ENCODE measurements at regions of chr12 and their contacts with region 1.

Region 1: DNA sequence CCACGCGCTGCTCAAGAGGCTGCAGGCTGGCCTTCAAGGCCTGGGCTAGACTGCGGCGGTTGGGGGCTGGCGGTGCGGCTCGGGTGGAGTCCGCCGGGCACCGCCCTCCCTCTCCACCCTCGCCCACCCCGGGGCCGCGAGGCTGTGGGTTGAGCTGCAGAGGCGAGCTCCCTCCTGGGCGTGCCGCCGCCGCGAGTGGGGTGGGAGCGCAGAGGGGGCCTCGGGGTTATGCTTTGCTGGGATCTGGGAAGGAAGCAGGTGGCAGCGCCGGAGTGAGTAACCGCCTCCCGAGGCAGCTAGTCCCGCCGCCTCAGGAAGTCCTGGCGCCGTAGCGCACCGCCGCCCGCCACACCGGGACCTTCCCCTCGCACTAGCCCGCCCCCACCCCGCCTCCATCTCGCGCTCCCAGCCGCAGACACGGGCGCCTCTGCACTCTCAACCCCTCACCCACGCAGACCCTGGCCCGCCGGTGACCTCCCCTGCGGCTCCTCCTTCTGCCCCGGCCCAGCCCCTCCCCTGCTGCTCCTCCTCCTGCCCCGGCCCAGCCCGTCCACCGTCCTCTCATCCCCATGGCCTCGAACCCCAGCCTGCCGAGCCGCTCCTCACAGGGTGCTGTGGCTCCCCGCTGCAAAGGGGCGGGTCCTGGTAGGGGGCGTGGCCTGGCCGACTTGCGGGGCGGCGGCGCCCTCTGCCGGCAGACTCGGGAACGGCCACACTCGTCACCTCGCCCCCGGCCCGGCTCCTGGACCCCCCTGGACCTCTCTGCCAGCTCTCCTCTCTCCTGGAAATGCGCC is 16.6 kb downstream of the TAMALIN start:
- DNase-seq: peak; percentile 93
- H3K4me3 Mint-ChIP-seq: peak overlapping the region; percentile 86
- H3K27ac Mint-ChIP-seq: peak overlapping the region; percentile 98
- H3K4me1 Mint-ChIP-seq: peaks cover 46% of the 10 kb centered on the region
- H3K27me3 Mint-ChIP-seq: peaks cover 6% of the 10 kb centered on the region

Region 2: DNA sequence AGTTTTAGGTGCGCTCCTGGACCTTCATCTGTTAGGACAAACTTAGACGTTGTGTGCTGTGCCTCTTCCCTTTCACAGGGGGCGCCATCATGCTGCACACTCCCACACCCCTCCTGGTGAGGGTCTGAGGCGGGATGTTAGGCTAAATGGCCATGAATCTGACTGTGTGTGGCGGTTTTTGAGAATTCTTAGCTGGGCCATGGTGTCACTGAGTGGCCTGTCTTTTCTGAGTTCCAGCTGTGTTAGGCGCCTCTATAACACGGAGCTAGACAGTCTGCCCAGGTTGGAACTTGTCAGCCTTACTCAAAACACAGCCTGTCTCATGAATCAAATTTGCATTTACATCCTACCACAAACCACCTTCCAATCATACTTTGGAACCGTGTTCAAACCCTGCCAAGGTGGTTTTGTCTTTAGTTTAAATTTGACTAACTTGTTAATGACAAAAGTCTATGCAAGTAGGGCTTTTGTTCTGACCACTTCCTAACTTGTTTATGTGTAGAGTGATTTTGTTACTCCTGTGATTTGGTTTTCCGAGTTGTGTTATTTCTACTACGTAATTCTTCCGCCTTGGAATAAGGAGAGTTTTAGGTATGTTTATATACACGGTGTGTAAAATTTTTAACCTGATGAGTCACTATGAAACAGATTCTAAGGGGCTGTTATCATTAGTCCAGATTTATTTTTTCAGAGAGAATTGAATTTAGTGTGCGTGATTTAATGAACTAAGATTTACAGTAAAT is 52.3 kb before region 1 on chr12:
- CTCF ChIA-PET with region 1: interaction called, 33 read pairs
- POLR2A ChIA-PET with region 1: interaction called, 5 read pairs
- DNase-seq: peak; percentile 68
- H3K4me3 Mint-ChIP-seq: peak overlapping the region; percentile 53
- H3K27ac Mint-ChIP-seq: peak overlapping the region; percentile 80
- H3K4me1 Mint-ChIP-seq: peaks cover 65% of the 10 kb centered on the region
- H3K27me3 Mint-ChIP-seq: peaks cover 36% of the 10 kb centered on the region

Region 3: GRCh38 chr12:52004042-52004648 is 19.2 kb before region 1 on chr12:
- CTCF ChIA-PET with region 1: interaction called, 299 read pairs
- POLR2A ChIA-PET with region 1: interaction called, 117 read pairs
- DNase-seq: no peak
- H3K4me3 Mint-ChIP-seq: no peak overlapping the region
- H3K27ac Mint-ChIP-seq: no peak overlapping the region
- H3K4me1 Mint-ChIP-seq: peaks cover 24% of the 10 kb centered on the region
- H3K27me3 Mint-ChIP-seq: peaks cover 34% of the 10 kb centered on the region

Region 4: GRCh38 chr12:52050761-52051541 is 27.6 kb after region 1 on chr12 and contains the start of gene NR4A1:
- CTCF ChIA-PET with region 1: interaction called, 37 read pairs
- POLR2A ChIA-PET with region 1: interaction called, 14 read pairs
- DNase-seq: peak; percentile 98
- H3K4me3 Mint-ChIP-seq: peak within 1 kb of the TSS; percentile 85
- H3K27ac Mint-ChIP-seq: peak within 1 kb of the TSS; percentile 82
- H3K4me1 Mint-ChIP-seq: peaks cover 46% of the 10 kb centered on the region
- H3K27me3 Mint-ChIP-seq: peaks cover 6% of the 10 kb centered on the region
- total RNA-seq, gene NR4A1: 10.0 to 10.5 TPM

Region 5: DNA sequence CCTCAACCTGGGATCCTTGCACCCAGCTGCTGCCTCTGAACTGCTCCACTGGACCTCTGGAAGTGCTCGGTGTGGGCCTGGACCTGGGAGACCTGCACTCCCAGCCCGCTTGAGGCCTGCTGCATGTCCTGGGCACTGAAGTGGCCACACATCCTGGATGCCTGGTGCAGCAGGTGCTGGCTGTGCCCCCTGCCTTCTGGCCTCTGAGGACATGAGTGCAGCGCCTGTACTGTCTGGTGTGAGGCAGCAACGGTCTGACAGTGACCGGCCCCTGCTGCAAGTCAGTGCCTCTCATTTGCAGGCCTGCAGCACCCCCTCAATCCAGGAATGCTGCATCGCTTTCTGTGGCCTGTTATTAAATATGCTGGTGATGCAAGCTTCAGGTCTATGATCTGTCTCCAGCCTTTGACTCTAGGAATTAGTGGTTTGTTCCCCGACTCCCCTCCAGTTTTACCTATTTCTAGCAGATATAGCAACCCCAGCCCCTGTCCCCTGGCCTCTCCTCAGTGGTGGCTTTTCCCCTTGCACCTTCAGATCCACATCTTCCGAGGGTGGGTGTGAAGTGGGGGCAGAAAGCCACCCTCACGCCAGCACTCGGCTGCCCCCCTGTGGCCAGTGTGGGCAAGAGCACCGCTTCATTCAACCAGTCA is 59.7 kb after region 1 on chr12:
- CTCF ChIA-PET with region 1: interaction called, 309 read pairs
- POLR2A ChIA-PET with region 1: interaction called, 27 read pairs
- DNase-seq: peak; percentile 69
- H3K4me3 Mint-ChIP-seq: no peak overlapping the region
- H3K27ac Mint-ChIP-seq: no peak overlapping the region
- H3K4me1 Mint-ChIP-seq: peaks cover 10% of the 10 kb centered on the region
- H3K27me3 Mint-ChIP-seq: peaks cover 13% of the 10 kb centered on the region

Region 6: DNA sequence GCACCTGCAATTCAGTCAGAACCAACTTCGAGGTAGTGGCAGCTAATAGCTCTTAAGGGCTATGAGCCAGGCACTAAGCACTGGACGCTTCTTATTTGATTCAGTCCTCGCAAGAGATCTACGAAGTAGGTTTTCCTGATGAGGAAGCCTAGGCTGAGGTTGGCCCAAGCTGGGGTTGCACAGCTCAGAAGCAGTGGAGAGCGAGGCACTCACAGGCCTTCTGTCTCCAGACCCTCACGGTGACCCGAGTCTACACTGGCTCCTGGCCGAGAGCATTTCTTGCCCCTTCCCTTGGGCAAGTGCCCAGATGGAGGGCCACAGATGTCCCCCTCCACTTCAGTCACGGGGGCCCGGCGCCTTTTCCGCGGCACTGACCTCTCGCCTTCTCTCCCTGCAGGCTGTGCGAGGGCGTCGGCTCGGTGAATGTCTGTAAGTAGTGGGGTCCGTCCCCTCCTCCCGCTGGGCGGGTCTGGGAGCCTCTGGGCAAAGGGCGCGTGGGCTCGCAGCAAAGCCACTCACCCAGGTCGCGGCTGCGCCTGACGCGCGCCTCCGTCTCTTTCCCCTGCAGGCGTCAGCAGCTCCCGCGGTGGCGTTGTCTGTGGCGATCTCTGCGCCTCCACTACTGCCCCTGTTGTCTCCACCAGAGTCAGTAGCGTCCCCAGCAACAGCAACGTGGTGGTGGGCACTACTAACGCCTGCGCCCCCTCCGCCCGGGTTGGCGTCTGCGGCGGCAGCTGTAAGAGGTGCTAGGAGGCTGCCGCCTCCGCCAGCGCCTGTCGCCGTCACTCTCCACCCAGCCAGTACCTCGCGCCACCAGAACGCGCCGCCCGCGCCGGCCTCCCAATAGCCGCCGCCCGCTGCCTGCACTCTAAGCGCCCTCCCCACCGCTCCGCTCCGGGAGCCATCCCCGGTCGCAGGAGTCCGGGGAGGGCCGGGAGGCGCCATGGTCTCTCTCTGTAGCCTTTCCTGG is 284.7 kb after region 1 on chr12:
- CTCF ChIA-PET with region 1: no interaction called
- POLR2A ChIA-PET with region 1: no interaction called
- DNase-seq: peak; percentile 49
- H3K4me3 Mint-ChIP-seq: peak overlapping the region; percentile 52
- H3K27ac Mint-ChIP-seq: no peak overlapping the region
- H3K4me1 Mint-ChIP-seq: peaks cover 24% of the 10 kb centered on the region
- H3K27me3 Mint-ChIP-seq: peaks cover 60% of the 10 kb centered on the region

Measured in activated CD4-positive, alpha-beta memory T cell treated with anti-CD3 and anti-CD28 coated beads, Interleukin-2, amount 10 ng/mL, durations not matched to agents 7 days and 5 days (primary cell).